Activated T-helper 2 cell treated with anti-CD3 and anti-CD28 coated beads, Interferon-gamma antibody, Interleukin-2, Interleukin-4, amounts not matched to agents 10 μg/mL and 5 μg/mL and 100 μg/mL, durations not matched to agents 14 hours and 24 hours and 36 hours (primary cell): ENCODE measurements at regions of chr3 and their contacts with region 1.

Region 1: DNA sequence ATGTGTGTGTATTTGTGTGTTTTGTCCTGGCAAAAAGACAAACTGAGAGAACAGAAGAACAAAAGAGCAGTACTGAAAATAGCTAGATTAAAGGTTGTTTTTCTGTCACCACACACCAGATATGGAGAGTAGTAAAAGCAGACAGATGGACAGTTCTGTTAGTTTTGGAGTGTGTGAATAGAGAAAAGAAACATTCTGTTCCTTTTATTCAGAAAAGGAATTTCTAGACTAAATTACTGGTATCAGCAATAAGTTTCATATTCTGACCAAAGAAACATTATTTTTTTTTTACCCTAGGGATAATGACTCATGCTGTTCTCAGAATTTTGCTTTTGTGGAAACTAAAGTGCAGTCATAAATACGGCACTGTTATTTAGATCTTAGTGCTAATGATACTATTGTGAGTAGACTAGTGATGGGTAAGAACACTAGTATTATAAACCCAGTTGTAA is 32.9 kb downstream of the PIK3CA start:
- DNase-seq: no peak
- H3K4me3 Mint-ChIP-seq: no peak overlapping the region
- H3K27ac Mint-ChIP-seq: no peak overlapping the region
- H3K4me1 Mint-ChIP-seq: peaks cover 14% of the 10 kb centered on the region
- H3K27me3 Mint-ChIP-seq: peaks cover 2% of the 10 kb centered on the region

Region 2: GRCh38 chr3:179196098-179196497 is 15.1 kb after region 1 on chr3:
- intact Hi-C with region 1: loop called (anchors 2 kb)
- DNase-seq: no peak
- H3K4me3 Mint-ChIP-seq: no peak overlapping the region
- H3K27ac Mint-ChIP-seq: no peak overlapping the region
- H3K4me1 Mint-ChIP-seq: peaks cover 23% of the 10 kb centered on the region
- H3K27me3 Mint-ChIP-seq: no peaks in the 10 kb centered on the region

Region 3: GRCh38 chr3:179236669-179237301 is 55.7 kb after region 1 on chr3:
- intact Hi-C with region 1: loop called (anchors 2 kb)
- DNase-seq: no peak
- H3K4me3 Mint-ChIP-seq: no peak overlapping the region
- H3K27ac Mint-ChIP-seq: peak overlapping the region; percentile 64
- H3K4me1 Mint-ChIP-seq: peaks cover 8% of the 10 kb centered on the region
- H3K27me3 Mint-ChIP-seq: no peaks in the 10 kb centered on the region

Region 4: DNA sequence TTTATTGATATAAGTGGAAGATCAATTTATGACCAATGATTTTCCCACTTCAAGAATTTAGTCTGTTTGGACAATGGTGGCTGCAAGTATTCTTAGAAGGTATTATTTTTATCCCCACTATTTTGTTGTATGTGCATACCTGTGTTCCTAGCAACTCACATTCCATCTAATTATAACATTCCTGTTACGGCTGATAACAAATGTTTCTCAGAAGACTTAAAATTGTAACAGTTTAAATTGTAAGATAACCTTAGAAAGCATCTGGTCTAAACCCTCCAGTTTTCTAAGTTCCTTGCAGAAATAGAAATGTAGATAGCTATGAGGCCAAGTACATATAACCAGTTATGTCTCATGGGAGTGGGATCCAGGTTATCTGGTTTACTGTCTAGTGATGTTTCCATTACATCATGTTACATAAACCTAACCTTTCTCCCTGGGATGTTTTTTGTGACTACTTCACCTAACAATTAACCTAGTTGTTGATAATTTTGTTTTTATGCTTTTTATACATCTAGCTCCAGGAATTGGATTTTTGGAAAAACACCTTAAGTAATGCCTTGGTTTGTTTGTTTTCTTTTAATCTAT is 155.4 kb after region 1 on chr3:
- intact Hi-C with region 1: no loop called
- DNase-seq: no peak
- H3K4me3 Mint-ChIP-seq: no peak overlapping the region
- H3K27ac Mint-ChIP-seq: no peak overlapping the region
- H3K4me1 Mint-ChIP-seq: no peaks in the 10 kb centered on the region
- H3K27me3 Mint-ChIP-seq: no peaks in the 10 kb centered on the region

Region 5: GRCh38 chr3:179391906-179392305 is 210.9 kb after region 1 on chr3:
- intact Hi-C with region 1: no loop called
- DNase-seq: no peak
- H3K4me3 Mint-ChIP-seq: no peak overlapping the region
- H3K27ac Mint-ChIP-seq: no peak overlapping the region
- H3K4me1 Mint-ChIP-seq: no peaks in the 10 kb centered on the region
- H3K27me3 Mint-ChIP-seq: no peaks in the 10 kb centered on the region